AG04450 (cell line): ENCODE measurements at regions of chr11 and their contacts with region 1.

Region 1: GRCh38 chr11:62841361-62842184 is 2.2 kb upstream of the WDR74 start:
- DNase-seq: peak; percentile 99
- H3K4me3 ChIP-seq: peak overlapping the region; percentile 50
- H3K27ac ChIP-seq: peak overlapping the region; percentile 97
- H3K27me3 ChIP-seq: no peaks in the 10 kb centered on the region
- CTCF ChIP-seq: no peak

Region 2: GRCh38 chr11:62591448-62592145 is 250.0 kb before region 1 on chr11 and contains the start of gene TUT1:
- CTCF ChIA-PET with region 1: no interaction called
- POLR2A ChIA-PET with region 1: interaction called, 11 read pairs
- DNase-seq: peak; percentile 97
- H3K4me3 ChIP-seq: peak within 1 kb of the TSS; percentile 68
- H3K27ac ChIP-seq: peak within 1 kb of the TSS; percentile 87
- H3K27me3 ChIP-seq: no peaks in the 10 kb centered on the region
- CTCF ChIP-seq: no peak
- polyA plus RNA-seq, gene TUT1: 7.8 and 9.0 TPM in 2 replicates

Region 3: GRCh38 chr11:62705880-62706849 is 135.4 kb before region 1 on chr11:
- CTCF ChIA-PET with region 1: no interaction called
- POLR2A ChIA-PET with region 1: interaction called, 11 read pairs
- DNase-seq: peak; percentile 79
- H3K4me3 ChIP-seq: peak overlapping the region; percentile 76
- H3K27ac ChIP-seq: peak overlapping the region; percentile 86
- H3K27me3 ChIP-seq: no peaks in the 10 kb centered on the region
- CTCF ChIP-seq: no peak

Region 4: DNA sequence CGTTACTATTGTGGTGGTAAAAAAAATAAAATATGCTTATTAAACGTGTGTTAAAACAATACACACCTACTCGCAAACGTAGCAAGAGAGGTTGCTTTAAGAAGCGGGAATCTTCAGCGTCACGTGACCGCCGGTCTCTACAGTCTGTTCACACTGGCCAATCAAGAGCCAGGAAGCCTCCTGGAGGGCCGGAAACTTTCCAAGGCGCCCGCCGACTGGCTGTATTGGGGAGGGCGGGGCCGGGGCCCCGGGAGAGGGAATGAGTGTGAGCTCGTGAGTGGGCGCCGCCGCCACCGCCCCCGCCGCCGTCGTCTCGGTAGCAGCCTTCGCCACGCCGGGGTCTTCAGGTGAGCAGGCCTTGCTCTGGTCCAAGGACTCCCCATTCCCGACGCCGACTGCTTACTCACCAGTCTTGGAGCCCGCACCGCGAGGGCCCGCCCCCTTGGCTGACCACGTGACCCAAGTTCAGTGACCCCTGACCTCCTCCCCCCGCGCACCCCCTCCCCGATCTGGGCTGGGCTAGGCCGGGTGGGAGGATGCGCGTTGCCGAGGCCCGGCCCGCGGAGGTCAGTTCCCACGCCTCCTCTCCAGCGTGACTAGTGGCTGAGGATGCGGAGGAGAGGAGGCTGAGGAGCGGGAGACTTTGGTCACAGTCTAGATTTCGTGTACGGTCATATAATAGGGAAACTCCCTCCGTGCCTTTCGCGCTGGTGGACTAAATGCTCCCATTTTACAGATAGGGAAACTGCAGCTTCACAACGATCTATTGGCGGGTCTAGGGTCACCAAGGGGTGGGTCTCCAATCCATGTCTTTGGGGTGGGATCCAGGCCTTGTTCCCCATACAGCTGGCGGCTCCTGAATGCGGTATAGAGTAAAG is 70.2 kb before region 1 on chr11 and contains the start of gene TAF6L:
- CTCF ChIA-PET with region 1: no interaction called
- POLR2A ChIA-PET with region 1: interaction called, 12 read pairs
- DNase-seq: peak; percentile 89
- H3K4me3 ChIP-seq: peak within 1 kb of the TSS; percentile 77
- H3K27ac ChIP-seq: peak within 1 kb of the TSS; percentile 85
- H3K27me3 ChIP-seq: no peaks in the 10 kb centered on the region
- CTCF ChIP-seq: no peak
- polyA plus RNA-seq, gene TAF6L: 8.9 and 13.4 TPM in 2 replicates

Region 5: GRCh38 chr11:62855571-62856332 is 14.2 kb after region 1 on chr11:
- CTCF ChIA-PET with region 1: no interaction called
- POLR2A ChIA-PET with region 1: interaction called, 172 read pairs
- DNase-seq: peak; percentile 98
- H3K4me3 ChIP-seq: peak overlapping the region; percentile 96
- H3K27ac ChIP-seq: peak overlapping the region; percentile 91
- H3K27me3 ChIP-seq: no peaks in the 10 kb centered on the region
- CTCF ChIP-seq: no peak

Region 6: GRCh38 chr11:62880803-62881578 is 39.4 kb after region 1 on chr11 and contains the start of gene SLC3A2:
- CTCF ChIA-PET with region 1: no interaction called
- POLR2A ChIA-PET with region 1: interaction called, 68 read pairs
- DNase-seq: peak; percentile 56
- H3K4me3 ChIP-seq: peak within 1 kb of the TSS; percentile 100
- H3K27ac ChIP-seq: peak within 1 kb of the TSS; percentile 99
- H3K27me3 ChIP-seq: no peaks in the 10 kb centered on the region
- CTCF ChIP-seq: peak; percentile 50; the same call in 1 of the 2 replicates
- polyA plus RNA-seq, gene SLC3A2: 263 and 284 TPM in 2 replicates